Ovary (tissue), 10 donors: ENCODE measurements at regions of chr1 and their contacts with region 1.

Region 1: GRCh38 chr1:55604749-55605148 is 389.6 kb upstream of the USP24 start:
- DNase-seq: peak in 4 of 5 donors; percentile 23 to 44 (median 29)
- H3K4me3 ChIP-seq: no peak overlapping the region
- H3K27ac ChIP-seq: peak overlapping the region; percentile 21 to 36
- H3K4me1 ChIP-seq: peaks cover 9% of the 10 kb centered on the region
- H3K27me3 ChIP-seq: no peaks in the 10 kb centered on the region
- CTCF ChIP-seq: no peak
- EP300 ChIP-seq: no peak
- POLR2A ChIP-seq: no peak

Region 2: DNA sequence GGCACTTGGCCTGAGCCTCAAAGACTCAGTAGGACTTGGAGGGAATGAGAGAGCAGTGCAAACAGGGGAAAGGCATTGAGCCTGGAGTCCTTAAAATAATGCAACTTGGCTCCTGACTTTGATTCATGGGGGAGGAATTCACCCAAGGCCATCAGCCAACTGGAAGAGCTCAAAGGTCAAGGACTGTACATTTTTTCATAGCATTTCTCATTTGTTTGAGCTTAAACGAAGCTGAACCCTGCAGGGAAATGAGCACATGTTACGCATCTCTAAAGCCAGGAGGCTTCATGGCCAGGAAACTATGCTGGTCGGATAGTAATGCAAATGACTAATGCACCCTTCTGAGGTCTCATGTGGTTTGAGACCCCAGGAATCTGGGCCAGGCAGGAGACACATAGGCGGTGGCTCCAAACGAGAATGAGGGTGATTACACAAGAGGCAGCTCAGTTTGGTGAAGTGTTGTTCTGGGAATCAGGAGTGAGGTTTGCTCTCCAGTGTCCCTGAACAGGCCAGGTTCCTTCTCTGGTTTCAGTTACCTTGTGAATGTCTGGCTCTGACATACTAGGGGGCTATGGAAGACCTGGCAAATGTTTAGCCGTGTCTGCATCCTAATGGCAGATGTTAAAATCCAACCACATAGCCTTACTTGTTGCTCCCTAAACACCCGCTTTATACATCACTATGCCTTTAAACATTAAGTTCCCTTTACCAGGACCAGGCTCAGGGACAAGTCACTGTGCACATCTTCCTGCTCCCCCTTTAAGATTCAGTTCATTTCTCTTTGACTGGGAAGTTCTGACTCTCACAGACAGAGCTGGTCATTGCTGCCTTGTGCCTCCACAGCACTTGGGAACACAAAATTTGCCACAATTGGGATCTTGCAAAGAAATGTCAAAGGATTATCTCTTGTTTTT is 114.3 kb after region 1 on chr1:
- intact Hi-C with region 1: loop called in 1 of 4 experiments (anchors 10 kb)
- DNase-seq: peak; percentile 73 to 90 (median 82)
- H3K4me3 ChIP-seq: no peak overlapping the region
- H3K27ac ChIP-seq: peak overlapping the region; percentile 66 to 88
- H3K4me1 ChIP-seq: peaks cover 27% of the 10 kb centered on the region
- H3K27me3 ChIP-seq: no peaks in the 10 kb centered on the region
- CTCF ChIP-seq: no peak
- EP300 ChIP-seq: peak; percentile 98
- POLR2A ChIP-seq: no peak